ENCODE measurements at regions of chr1 and their contacts with region 1.

Region 1: DNA sequence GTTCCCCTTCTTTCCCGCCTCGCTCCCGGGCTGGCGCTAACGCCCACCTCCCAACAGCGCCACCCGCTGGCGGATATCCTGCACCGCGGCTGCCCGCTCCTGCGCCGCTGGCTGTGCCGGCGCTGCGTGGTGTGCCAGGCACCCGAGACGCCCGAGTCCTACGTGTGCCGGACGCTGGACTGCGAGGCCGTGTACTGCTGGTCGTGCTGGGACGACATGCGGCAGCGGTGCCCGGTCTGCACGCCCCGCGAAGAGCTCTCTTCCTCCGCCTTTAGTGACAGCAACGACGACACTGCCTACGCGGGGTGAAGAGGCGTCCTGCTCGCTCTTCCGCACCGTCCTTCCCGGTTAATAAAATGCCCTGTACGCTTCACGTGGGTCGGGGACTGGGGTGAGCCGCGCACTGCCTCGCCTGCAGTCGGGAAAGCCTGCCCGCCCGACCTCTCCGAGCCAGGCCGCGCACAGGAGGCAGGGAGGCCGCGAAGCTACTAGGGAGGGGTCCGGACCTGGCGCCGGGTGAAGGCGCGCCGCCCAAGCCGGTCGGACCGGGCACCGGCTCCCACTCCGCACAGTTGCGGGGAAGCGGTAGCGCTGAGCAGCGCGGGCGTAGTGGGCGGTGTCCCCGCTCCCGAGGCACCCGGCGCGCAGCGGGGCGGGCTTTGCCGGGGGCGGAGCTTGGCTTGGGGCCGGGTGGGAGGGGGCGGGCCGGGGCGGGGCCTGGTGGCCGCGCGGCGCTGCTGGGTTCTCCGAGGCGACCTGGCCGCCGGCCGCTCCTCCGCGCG is at the start of gene ADAM15:
- DNase-seq: peak; percentile 99
- CTCF ChIP-seq: peak; percentile 94

Region 2: GRCh38 chr1:155038602-155039307 is 12.0 kb before region 1 on chr1:
- CTCF ChIA-PET with region 1: interaction called, 285 read pairs
- POLR2A ChIA-PET with region 1: interaction called, 3 read pairs
- DNase-seq: no peak
- CTCF ChIP-seq: no peak

Region 3: DNA sequence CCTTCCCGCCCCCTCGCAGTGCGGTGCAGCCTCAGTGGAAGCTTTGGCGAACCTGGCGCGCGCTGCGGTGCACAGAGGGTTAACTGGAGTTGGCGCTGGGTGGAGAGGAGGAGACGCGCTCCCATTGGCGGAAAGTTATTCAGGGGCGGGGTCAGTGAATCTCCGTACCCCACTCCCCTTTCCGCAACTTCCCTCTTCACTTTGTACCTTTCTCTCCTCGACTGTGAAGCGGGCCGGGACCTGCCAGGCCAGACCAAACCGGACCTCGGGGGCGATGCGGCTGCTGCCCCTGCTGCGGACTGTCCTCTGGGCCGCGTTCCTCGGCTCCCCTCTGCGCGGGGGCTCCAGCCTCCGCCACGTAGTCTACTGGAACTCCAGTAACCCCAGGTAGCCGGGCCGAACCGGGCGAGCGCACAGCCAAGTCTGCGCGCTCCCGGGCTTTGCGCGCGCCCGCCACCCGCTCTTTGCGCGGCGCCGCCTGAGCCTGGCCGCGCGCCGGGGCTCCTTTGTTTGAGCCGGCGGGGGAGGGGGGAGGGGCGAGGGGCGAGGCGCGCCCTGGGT is 12.9 kb after region 1 on chr1 and contains the start of gene EFNA4:
- CTCF ChIA-PET with region 1: interaction called, 285 read pairs
- POLR2A ChIA-PET with region 1: no interaction called
- DNase-seq: peak; percentile 91
- CTCF ChIP-seq: no peak

Region 4: GRCh38 chr1:155070721-155071569 is 20.2 kb after region 1 on chr1:
- CTCF ChIA-PET with region 1: interaction called, 285 read pairs
- POLR2A ChIA-PET with region 1: no interaction called
- DNase-seq: peak; percentile 81
- CTCF ChIP-seq: peak; percentile 26